Activated B cell treated with CpG ODN at 0.5 μM for 24 hours (primary cell): ENCODE measurements at regions of chr17 and their contacts with region 1.

Region 1: DNA sequence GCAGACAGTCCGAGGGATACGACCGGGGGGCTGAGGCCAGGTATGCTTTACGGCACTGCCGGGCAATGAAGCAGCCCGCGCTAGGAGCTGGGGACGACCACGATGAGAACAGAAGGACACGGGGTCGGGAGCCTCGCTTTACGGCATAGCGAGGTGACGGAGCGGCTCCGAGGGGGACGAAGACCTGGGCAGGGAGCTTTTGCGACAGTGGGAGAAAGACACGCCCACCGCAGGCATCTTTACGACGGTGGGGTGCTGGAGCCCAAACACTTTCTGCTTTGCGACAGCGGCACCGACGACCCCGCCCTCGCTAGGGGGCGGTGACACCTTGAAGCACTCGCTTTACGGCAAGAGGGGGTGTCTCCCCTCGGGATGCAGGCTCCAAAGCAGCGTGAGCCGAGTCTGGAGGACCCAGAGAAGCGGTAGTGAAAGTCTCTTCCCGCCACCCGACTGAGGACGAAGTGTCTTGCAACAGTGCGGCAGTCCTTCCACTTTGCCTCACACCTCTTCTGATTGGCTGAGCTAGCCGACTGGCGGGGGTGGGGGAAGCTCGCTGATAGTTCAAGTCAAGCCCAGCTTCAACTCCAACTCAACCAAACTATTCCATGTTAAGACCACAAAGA is 350 bp upstream of the NEURL4 start:
- DNase-seq: peak; percentile 92
- ATAC-seq: peak; percentile 74
- H3K4me3 Mint-ChIP-seq: peak overlapping the region; percentile 95
- H3K27ac Mint-ChIP-seq: peak overlapping the region; percentile 96
- H3K4me1 Mint-ChIP-seq: peaks cover 41% of the 10 kb centered on the region
- H3K27me3 Mint-ChIP-seq: no peaks in the 10 kb centered on the region
- CTCF ChIP-seq: no peak

Region 2: GRCh38 chr17:6927290-6928126 is 402.0 kb before region 1 on chr17:
- CTCF ChIA-PET with region 1: no interaction called
- POLR2A ChIA-PET with region 1: no interaction called
- intact Hi-C with region 1: no loop called
- DNase-seq: no peak
- ATAC-seq: no peak
- H3K4me3 Mint-ChIP-seq: no peak overlapping the region
- H3K27ac Mint-ChIP-seq: no peak overlapping the region
- H3K4me1 Mint-ChIP-seq: peaks cover 2% of the 10 kb centered on the region
- H3K27me3 Mint-ChIP-seq: peaks cover 11% of the 10 kb centered on the region
- CTCF ChIP-seq: no peak

Region 3: GRCh38 chr17:7204828-7205461 is 124.5 kb before region 1 on chr17:
- CTCF ChIA-PET with region 1: no interaction called
- POLR2A ChIA-PET with region 1: no interaction called
- intact Hi-C with region 1: loop called (anchors 1 kb)
- DNase-seq: peak; percentile 95
- ATAC-seq: peak; percentile 88
- H3K4me3 Mint-ChIP-seq: peak overlapping the region; percentile 87
- H3K27ac Mint-ChIP-seq: peak overlapping the region; percentile 94
- H3K4me1 Mint-ChIP-seq: peaks cover 30% of the 10 kb centered on the region
- H3K27me3 Mint-ChIP-seq: no peaks in the 10 kb centered on the region
- CTCF ChIP-seq: no peak

Region 4: GRCh38 chr17:7252176-7253043 is 77.1 kb before region 1 on chr17 and contains the start of gene ELP5:
- CTCF ChIA-PET with region 1: no interaction called
- POLR2A ChIA-PET with region 1: interaction called, 3 read pairs
- intact Hi-C with region 1: loop called (anchors 1 kb)
- DNase-seq: no peak
- ATAC-seq: peak; percentile 61
- H3K4me3 Mint-ChIP-seq: peak within 1 kb of the TSS; percentile 98
- H3K27ac Mint-ChIP-seq: peak within 1 kb of the TSS; percentile 100
- H3K4me1 Mint-ChIP-seq: peaks cover 44% of the 10 kb centered on the region
- H3K27me3 Mint-ChIP-seq: no peaks in the 10 kb centered on the region
- CTCF ChIP-seq: no peak
- total RNA-seq, gene ELP5: 49.2 and 53.6 TPM in 2 replicates

Region 5: DNA sequence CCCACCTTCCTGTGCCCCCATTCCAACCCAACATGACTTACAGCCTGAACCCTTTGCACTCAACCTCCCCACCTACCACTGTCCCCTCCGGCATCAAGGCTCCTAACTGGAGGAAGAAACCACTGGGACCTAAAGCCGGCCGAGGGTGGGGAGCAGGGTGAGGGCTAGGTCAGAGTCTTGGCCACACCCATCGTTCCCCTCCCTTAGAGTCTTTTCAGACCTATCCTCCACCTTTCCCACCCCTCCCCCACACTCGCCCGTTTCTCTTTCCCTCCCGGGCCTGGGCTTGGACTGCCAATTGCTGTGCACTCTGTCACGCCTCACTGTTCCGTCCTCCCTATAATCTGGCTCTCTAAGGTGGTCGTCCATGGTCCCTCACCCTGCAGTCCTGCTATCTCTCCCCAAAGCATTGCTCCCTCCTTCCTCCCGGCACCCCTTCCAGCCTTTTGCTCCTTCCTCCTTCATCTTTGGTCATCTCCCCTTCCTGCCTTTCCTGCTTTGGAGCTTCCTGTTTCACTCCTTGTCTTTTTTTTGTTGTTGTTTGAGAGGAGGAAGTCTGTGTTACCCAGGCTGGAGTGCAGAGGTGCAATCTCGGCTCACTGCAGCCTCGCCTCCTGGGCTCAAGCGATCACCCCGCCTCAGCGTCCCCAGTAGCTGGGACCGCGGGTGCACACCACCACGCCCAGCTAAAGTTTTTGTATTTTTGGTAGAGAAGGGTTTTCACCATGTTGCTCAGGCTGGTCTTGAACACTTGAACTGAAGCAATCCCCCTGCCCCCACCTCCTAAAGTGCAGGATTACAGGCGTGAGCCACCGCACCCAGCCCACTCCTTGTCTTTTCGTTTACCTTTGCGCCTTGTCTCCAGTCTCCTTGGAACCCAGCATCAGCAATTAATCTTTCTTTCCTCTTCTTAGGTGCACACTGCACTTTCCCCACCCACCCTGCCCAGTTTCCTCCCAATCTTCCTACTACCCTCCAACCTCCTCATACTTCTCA is 66.1 kb before region 1 on chr17:
- CTCF ChIA-PET with region 1: no interaction called
- POLR2A ChIA-PET with region 1: no interaction called
- intact Hi-C with region 1: no loop called
- DNase-seq: no peak
- ATAC-seq: peak; percentile 19
- H3K4me3 Mint-ChIP-seq: peak overlapping the region; percentile 77
- H3K27ac Mint-ChIP-seq: peak overlapping the region; percentile 30
- H3K4me1 Mint-ChIP-seq: peaks cover 29% of the 10 kb centered on the region
- H3K27me3 Mint-ChIP-seq: peaks cover 15% of the 10 kb centered on the region
- CTCF ChIP-seq: no peak

Region 6: GRCh38 chr17:7280519-7281429 is 48.7 kb before region 1 on chr17:
- CTCF ChIA-PET with region 1: no interaction called
- POLR2A ChIA-PET with region 1: interaction called, 8 read pairs
- intact Hi-C with region 1: loop called (anchors 1 kb)
- DNase-seq: peak; percentile 82
- ATAC-seq: peak; percentile 83
- H3K4me3 Mint-ChIP-seq: peak overlapping the region; percentile 82
- H3K27ac Mint-ChIP-seq: peak overlapping the region; percentile 77
- H3K4me1 Mint-ChIP-seq: peaks cover 14% of the 10 kb centered on the region
- H3K27me3 Mint-ChIP-seq: peaks cover 12% of the 10 kb centered on the region
- CTCF ChIP-seq: peak; percentile 42

Region 7: DNA sequence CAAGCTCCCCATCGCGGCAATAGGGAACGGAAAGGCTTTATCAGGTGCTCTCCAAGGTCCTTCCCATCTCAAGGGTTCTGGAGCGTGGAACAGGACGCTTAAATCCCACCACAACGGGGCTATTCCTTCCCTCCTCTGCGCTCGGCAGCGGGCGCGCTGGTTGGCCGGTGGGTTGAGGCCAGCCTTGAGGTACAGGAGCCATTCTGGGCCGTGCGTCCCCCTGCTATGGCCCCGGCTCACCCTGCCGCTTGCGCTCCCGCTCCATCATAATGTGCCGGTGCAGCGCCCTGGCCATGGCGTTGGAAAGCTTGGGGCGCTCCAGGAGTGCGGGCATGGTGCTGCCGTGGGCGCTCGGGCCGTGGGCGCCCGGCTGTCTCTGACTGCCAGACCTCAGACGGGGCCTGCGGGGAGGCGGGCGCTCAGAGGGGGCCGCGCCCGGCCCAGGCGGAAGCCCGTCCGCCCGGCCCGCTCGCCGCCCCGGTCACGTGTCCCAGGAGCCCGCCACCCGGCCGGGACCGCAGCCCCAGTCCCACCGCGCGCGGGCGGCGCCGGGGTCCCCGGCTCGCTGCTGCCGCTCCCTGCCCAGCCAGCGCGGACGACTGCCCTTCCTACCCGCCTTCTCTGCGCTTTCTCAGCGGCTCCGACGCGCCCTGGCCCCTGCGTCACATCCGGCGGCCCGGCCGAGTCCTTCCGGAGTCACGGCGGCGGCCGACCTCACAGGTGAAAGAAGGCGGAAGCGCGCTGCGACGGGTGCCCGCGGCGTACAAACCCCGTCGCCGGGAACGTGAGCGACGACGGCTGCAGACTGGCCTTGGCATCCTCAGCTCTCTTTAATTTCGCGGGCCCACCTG is 14.5 kb before region 1 on chr17 and contains the start of gene GPS2:
- CTCF ChIA-PET with region 1: interaction called, 4 read pairs
- POLR2A ChIA-PET with region 1: interaction called, 62 read pairs
- intact Hi-C with region 1: loop called (anchors 1 kb)
- DNase-seq: peak; percentile 95
- ATAC-seq: peak; percentile 82
- H3K4me3 Mint-ChIP-seq: peak within 1 kb of the TSS; percentile 89
- H3K27ac Mint-ChIP-seq: peak within 1 kb of the TSS; percentile 87
- H3K4me1 Mint-ChIP-seq: peaks cover 54% of the 10 kb centered on the region
- H3K27me3 Mint-ChIP-seq: no peaks in the 10 kb centered on the region
- CTCF ChIP-seq: no peak
- total RNA-seq, gene GPS2: 105 and 115 TPM in 2 replicates

Region 8: DNA sequence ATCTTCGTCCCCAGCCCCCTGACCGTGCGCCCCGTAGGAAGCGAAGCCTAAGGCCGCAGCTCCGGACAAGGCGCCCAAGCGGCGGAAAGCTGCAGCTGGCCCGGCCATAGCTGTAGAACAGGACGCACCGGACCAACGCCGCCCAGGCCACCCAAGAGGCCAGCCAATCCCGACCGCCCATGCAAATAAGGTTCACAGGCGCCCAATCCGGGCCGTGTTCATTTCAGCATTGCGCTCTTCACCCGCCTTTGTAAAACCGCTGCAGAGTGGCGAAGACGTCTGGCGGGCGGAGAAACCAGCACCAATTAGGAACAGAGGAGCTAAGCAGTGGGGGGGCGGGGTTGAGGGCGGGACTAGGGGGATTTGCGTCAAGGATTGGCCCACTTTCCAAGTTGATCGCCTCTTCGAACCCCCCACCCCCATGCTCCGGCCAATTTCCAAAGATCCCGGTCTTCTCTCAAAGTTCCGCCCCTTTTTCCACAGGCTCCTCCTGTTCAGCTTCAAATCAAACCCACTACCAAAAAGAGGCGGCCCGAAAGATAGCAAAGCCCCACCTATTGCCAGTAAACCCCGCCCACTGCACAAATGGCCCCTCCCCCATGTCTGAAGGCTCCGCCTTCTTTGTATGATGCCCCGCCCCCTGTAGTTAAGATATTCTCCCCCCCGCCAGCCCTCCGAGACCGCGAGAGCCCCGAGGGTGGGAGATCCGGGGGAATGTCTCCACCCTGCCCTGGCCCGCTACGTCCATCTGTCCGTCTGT is 74.7 kb after region 1 on chr17 and contains the start of gene TMEM256:
- CTCF ChIA-PET with region 1: no interaction called
- POLR2A ChIA-PET with region 1: interaction called, 14 read pairs
- intact Hi-C with region 1: no loop called
- DNase-seq: peak; percentile 82
- ATAC-seq: peak; percentile 89
- H3K4me3 Mint-ChIP-seq: peak within 1 kb of the TSS; percentile 97
- H3K27ac Mint-ChIP-seq: peak within 1 kb of the TSS; percentile 94
- H3K4me1 Mint-ChIP-seq: peaks cover 16% of the 10 kb centered on the region
- H3K27me3 Mint-ChIP-seq: peaks cover 12% of the 10 kb centered on the region
- CTCF ChIP-seq: no peak
- total RNA-seq, gene TMEM256: 98.2 and 117 TPM in 2 replicates

Region 9: GRCh38 chr17:7444682-7445618 is 115.5 kb after region 1 on chr17 and contains the start of gene CHRNB1:
- CTCF ChIA-PET with region 1: no interaction called
- POLR2A ChIA-PET with region 1: no interaction called
- intact Hi-C with region 1: no loop called
- DNase-seq: peak; percentile 23
- ATAC-seq: peak; percentile 32
- H3K4me3 Mint-ChIP-seq: peak within 1 kb of the TSS; percentile 78
- H3K27ac Mint-ChIP-seq: no peak within 1 kb of the TSS
- H3K4me1 Mint-ChIP-seq: peaks cover 35% of the 10 kb centered on the region
- H3K27me3 Mint-ChIP-seq: peaks cover 62% of the 10 kb centered on the region
- CTCF ChIP-seq: no peak
- total RNA-seq, gene CHRNB1: 5.9 and 6.0 TPM in 2 replicates